ENCODE measurements at regions of chr2 and their contacts with region 1.

Region 1: GRCh38 chr2:231612179-231613053 is 19.8 kb downstream of the TEX44 start:
- DNase-seq: peak; percentile 96
- ATAC-seq: peak; percentile 76
- H3K4me3 ChIP-seq: no peak overlapping the region
- H3K27ac ChIP-seq: peak overlapping the region; percentile 46
- H3K4me1 ChIP-seq: peaks cover 23% of the 10 kb centered on the region
- H3K27me3 ChIP-seq: no peaks in the 10 kb centered on the region
- CTCF ChIP-seq: peak; percentile 97
- POLR2A ChIP-seq: peak; percentile 67
- RAD21 ChIP-seq: peak; percentile 98

Region 2: GRCh38 chr2:231138699-231139098 is 473.7 kb before region 1 on chr2:
- CTCF ChIA-PET with region 1: no interaction called
- POLR2A ChIA-PET with region 1: no interaction called
- dilution Hi-C with region 1: no loop called
- in situ Hi-C with region 1: no loop called
- intact Hi-C with region 1: no loop called
- DNase-seq: peak; percentile 77
- ATAC-seq: peak; percentile 67
- H3K4me3 ChIP-seq: no peak overlapping the region
- H3K27ac ChIP-seq: peak overlapping the region; percentile 50; the same call in 1 of the 2 replicates
- H3K4me1 ChIP-seq: peaks cover 5% of the 10 kb centered on the region
- H3K27me3 ChIP-seq: no peaks in the 10 kb centered on the region
- CTCF ChIP-seq: no peak
- POLR2A ChIP-seq: no peak
- RAD21 ChIP-seq: no peak

Region 3: DNA sequence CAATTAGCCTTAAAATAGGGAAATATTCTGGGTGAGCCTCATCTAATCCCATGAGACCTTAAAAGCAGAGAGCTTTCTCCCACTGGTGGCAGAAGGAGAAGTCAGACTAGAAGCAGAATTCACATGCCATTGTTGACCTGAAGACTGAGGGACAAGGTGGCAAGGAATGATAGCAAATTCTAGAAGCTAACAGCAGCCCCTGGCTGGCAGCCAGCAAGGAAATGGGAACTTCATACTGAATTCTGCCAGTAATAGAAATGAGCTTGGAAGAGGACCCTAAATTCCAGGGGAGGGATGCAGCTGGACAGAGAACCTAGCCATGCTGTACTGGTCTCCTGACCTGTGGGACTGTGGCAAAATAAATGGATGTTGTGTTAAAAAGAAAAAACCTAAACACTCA is 197.4 kb before region 1 on chr2:
- CTCF ChIA-PET with region 1: no interaction called
- POLR2A ChIA-PET with region 1: no interaction called
- dilution Hi-C with region 1: no loop called
- in situ Hi-C with region 1: no loop called
- intact Hi-C with region 1: no loop called
- DNase-seq: no peak
- ATAC-seq: no peak
- H3K4me3 ChIP-seq: no peak overlapping the region
- H3K27ac ChIP-seq: no peak overlapping the region
- H3K4me1 ChIP-seq: 0 out of 2 replicates have a peak, but pooled peaks cover 3% of the 10 kb centered on the region
- H3K27me3 ChIP-seq: no peaks in the 10 kb centered on the region
- CTCF ChIP-seq: no peak
- POLR2A ChIP-seq: no peak
- RAD21 ChIP-seq: no peak

Region 4: GRCh38 chr2:231662028-231662810 is 49.8 kb after region 1 on chr2:
- CTCF ChIA-PET with region 1: interaction called, 3 read pairs
- POLR2A ChIA-PET with region 1: no interaction called
- dilution Hi-C with region 1: no loop called
- in situ Hi-C with region 1: no loop called
- intact Hi-C with region 1: loop called (anchors 2 kb)
- DNase-seq: peak; percentile 95
- ATAC-seq: peak; percentile 73
- H3K4me3 ChIP-seq: peak overlapping the region; percentile 20
- H3K27ac ChIP-seq: peak overlapping the region; percentile 55
- H3K4me1 ChIP-seq: peaks cover 14% of the 10 kb centered on the region
- H3K27me3 ChIP-seq: no peaks in the 10 kb centered on the region
- CTCF ChIP-seq: 0 out of 2 replicates have a peak, but pooled peaks have one; percentile 8
- POLR2A ChIP-seq: peak; percentile 60; the same call in 1 of the 2 replicates
- RAD21 ChIP-seq: peak; percentile 18

Region 5: GRCh38 chr2:231709981-231710798 is 97.8 kb after region 1 on chr2:
- CTCF ChIA-PET with region 1: interaction called, 14 read pairs
- POLR2A ChIA-PET with region 1: interaction called, 4 read pairs
- dilution Hi-C with region 1: no loop called
- in situ Hi-C with region 1: loop called (anchors 5 kb)
- intact Hi-C with region 1: loop called (anchors 1 kb)
- DNase-seq: peak; percentile 80
- ATAC-seq: peak; percentile 38
- H3K4me3 ChIP-seq: peak overlapping the region; percentile 89
- H3K27ac ChIP-seq: peak overlapping the region; percentile 86
- H3K4me1 ChIP-seq: peaks cover 12% of the 10 kb centered on the region
- H3K27me3 ChIP-seq: no peaks in the 10 kb centered on the region
- CTCF ChIP-seq: peak; percentile 98
- POLR2A ChIP-seq: peak; percentile 78
- RAD21 ChIP-seq: peak; percentile 40

Region 6: DNA sequence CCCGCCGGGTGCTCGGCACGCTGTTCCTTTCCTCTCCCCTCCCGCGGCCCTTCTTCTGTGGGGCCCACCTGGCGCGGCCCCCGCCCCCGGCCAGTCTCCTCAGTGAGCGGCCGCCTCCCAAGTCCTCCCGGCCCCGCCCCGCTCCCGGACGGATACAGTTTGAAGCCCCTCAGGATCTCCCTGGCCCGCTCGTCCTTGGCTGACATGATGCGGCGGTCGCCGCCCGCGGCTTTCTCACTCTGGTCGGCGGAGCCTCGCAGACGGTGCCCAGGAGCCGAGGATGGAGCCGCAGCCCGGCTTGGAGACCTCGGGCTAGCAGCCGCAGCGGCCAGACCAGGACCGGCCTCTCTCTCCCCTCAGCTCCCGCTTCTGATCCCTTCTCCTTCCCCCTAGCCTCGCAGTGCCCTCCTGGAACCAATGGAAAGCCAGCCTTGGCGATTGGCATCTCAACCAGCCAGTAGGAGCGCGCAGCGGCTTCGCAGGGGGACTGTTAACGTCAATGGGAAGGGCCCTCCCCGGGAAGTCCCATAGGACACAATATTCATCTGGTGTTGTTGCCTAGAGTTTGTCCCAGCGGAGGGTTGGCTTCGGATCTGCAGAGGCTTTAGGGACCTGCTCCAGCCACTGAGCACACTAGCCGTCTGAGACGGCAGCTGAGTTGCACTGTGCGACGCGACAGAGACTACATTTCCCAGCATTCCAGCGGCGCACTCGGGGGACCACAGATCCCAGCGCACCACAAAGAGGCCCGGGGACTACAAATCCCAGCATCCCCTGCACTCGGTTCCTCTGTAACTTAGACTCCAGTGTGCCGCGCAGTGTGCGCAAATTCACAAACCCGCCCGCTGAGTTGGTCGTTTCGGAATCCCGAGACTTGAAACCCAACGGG is 168.7 kb after region 1 on chr2 and contains the start of gene PDE6D:
- CTCF ChIA-PET with region 1: no interaction called
- POLR2A ChIA-PET with region 1: no interaction called
- dilution Hi-C with region 1: no loop called
- in situ Hi-C with region 1: loop called (anchors 5 kb)
- intact Hi-C with region 1: loop called (anchors 1 kb)
- DNase-seq: peak; percentile 99
- ATAC-seq: peak; percentile 97
- H3K4me3 ChIP-seq: peak within 1 kb of the TSS; percentile 60
- H3K27ac ChIP-seq: peak within 1 kb of the TSS; percentile 31
- H3K4me1 ChIP-seq: peaks cover 7% of the 10 kb centered on the region
- H3K27me3 ChIP-seq: no peaks in the 10 kb centered on the region
- CTCF ChIP-seq: no peak
- POLR2A ChIP-seq: peak; percentile 69; the same call in 1 of the 2 replicates
- RAD21 ChIP-seq: no peak
- total RNA-seq, gene PDE6D: 13.6 and 13.8 TPM in 2 replicates

Region 7: GRCh38 chr2:231786177-231786916 is 173.9 kb after region 1 on chr2 and contains the start of gene COPS7B:
- CTCF ChIA-PET with region 1: no interaction called
- POLR2A ChIA-PET with region 1: no interaction called
- dilution Hi-C with region 1: no loop called
- in situ Hi-C with region 1: loop called (anchors 5 kb)
- intact Hi-C with region 1: loop called (anchors 1 kb)
- DNase-seq: peak; percentile 72
- ATAC-seq: peak; percentile 86
- H3K4me3 ChIP-seq: peak within 1 kb of the TSS; percentile 88
- H3K27ac ChIP-seq: peak within 1 kb of the TSS; percentile 80
- H3K4me1 ChIP-seq: peaks cover 6% of the 10 kb centered on the region
- H3K27me3 ChIP-seq: no peaks in the 10 kb centered on the region
- CTCF ChIP-seq: peak; percentile 54
- POLR2A ChIP-seq: no peak
- RAD21 ChIP-seq: peak; percentile 34
- total RNA-seq, gene COPS7B: 22.2 and 23.1 TPM in 2 replicates